WTC11 (cell line): ENCODE measurements at regions of chr19 and their contacts with region 1.

Region 1: GRCh38 chr19:47348819-47349795 is at the start of gene DHX34:
- DNase-seq: peak; percentile 99
- ATAC-seq: peak; percentile 97
- H3K4me3 Mint-ChIP-seq: peak within 1 kb of the TSS; percentile 92
- H3K27ac Mint-ChIP-seq: peak within 1 kb of the TSS; percentile 86
- H3K4me1 Mint-ChIP-seq: peaks cover 29% of the 10 kb centered on the region
- H3K27me3 Mint-ChIP-seq: peaks cover 14% of the 10 kb centered on the region
- CTCF ChIP-seq: peak; percentile 99
- total RNA-seq, gene DHX34: 35.6 to 36.5 TPM (median 35.6 TPM) in 3 replicates

Region 2: GRCh38 chr19:47225746-47226425 is 123.2 kb before region 1 on chr19:
- CTCF ChIA-PET with region 1: no interaction called
- POLR2A ChIA-PET with region 1: no interaction called
- DNase-seq: peak; percentile 84
- ATAC-seq: peak; percentile 18
- H3K4me3 Mint-ChIP-seq: peak overlapping the region; percentile 43
- H3K27ac Mint-ChIP-seq: peak overlapping the region; percentile 95
- H3K4me1 Mint-ChIP-seq: peaks cover 16% of the 10 kb centered on the region
- H3K27me3 Mint-ChIP-seq: no peaks in the 10 kb centered on the region; the same call in 1 of the 2 replicates
- CTCF ChIP-seq: no peak

Region 3: GRCh38 chr19:47273313-47273977 is 75.7 kb before region 1 on chr19:
- CTCF ChIA-PET with region 1: interaction called, 24 read pairs
- POLR2A ChIA-PET with region 1: interaction called, 3 read pairs
- DNase-seq: peak; percentile 93
- ATAC-seq: peak; percentile 63
- H3K4me3 Mint-ChIP-seq: peak overlapping the region; percentile 91
- H3K27ac Mint-ChIP-seq: peak overlapping the region; percentile 99
- H3K4me1 Mint-ChIP-seq: peaks cover 16% of the 10 kb centered on the region
- H3K27me3 Mint-ChIP-seq: peaks cover 18% of the 10 kb centered on the region
- CTCF ChIP-seq: no peak

Region 4: GRCh38 chr19:47305309-47305751 is 43.8 kb before region 1 on chr19:
- CTCF ChIA-PET with region 1: interaction called, 16 read pairs
- POLR2A ChIA-PET with region 1: no interaction called
- DNase-seq: peak; percentile 88
- ATAC-seq: peak; percentile 81
- H3K4me3 Mint-ChIP-seq: peak overlapping the region; percentile 45; the same call in 1 of the 2 replicates
- H3K27ac Mint-ChIP-seq: peak overlapping the region; percentile 73; the same call in 1 of the 2 replicates
- H3K4me1 Mint-ChIP-seq: peaks cover 2% of the 10 kb centered on the region
- H3K27me3 Mint-ChIP-seq: peaks cover 11% of the 10 kb centered on the region
- CTCF ChIP-seq: peak; percentile 96

Region 5: DNA sequence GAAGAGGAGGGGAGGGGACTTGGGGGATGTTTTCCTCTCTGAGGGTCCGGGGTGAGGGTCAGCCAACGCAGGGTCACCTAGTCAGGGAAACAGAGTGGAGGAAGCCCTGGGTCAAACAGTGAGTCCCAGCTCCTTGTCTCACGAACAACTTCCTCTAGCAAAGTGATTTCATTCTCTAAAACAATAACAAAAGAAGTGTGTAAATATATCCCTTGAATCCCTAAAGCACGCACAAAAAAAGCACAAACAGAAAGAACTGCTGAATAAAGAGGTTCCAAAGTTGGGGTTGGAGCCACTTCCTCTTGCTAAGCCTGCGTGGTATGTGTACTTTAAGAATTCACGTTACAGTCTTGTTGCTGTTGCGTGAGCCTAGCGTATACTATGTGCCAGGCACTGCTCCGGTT is 18.6 kb before region 1 on chr19:
- CTCF ChIA-PET with region 1: interaction called, 61 read pairs
- POLR2A ChIA-PET with region 1: interaction called, 3 read pairs
- DNase-seq: no peak
- ATAC-seq: no peak
- H3K4me3 Mint-ChIP-seq: no peak overlapping the region
- H3K27ac Mint-ChIP-seq: no peak overlapping the region
- H3K4me1 Mint-ChIP-seq: 0 out of 2 replicates have a peak, but pooled peaks cover 4% of the 10 kb centered on the region
- H3K27me3 Mint-ChIP-seq: peaks cover 4% of the 10 kb centered on the region; the same call in 1 of the 2 replicates
- CTCF ChIP-seq: no peak

Region 6: GRCh38 chr19:47391510-47392223 is 42.6 kb after region 1 on chr19:
- CTCF ChIA-PET with region 1: interaction called, 55 read pairs
- POLR2A ChIA-PET with region 1: interaction called, 6 read pairs
- DNase-seq: peak; percentile 91
- ATAC-seq: peak; percentile 99
- H3K4me3 Mint-ChIP-seq: 0 out of 2 replicates have a peak overlapping the region, but pooled peaks have one; percentile 21
- H3K27ac Mint-ChIP-seq: peak overlapping the region; percentile 58
- H3K4me1 Mint-ChIP-seq: peaks cover 22% of the 10 kb centered on the region
- H3K27me3 Mint-ChIP-seq: peaks cover 14% of the 10 kb centered on the region
- CTCF ChIP-seq: peak; percentile 92

Region 7: GRCh38 chr19:47485210-47485609 is 136.1 kb after region 1 on chr19:
- CTCF ChIA-PET with region 1: no interaction called
- POLR2A ChIA-PET with region 1: no interaction called
- DNase-seq: no peak
- ATAC-seq: no peak
- H3K4me3 Mint-ChIP-seq: peak overlapping the region; percentile 96
- H3K27ac Mint-ChIP-seq: peak overlapping the region; percentile 2; the same call in 1 of the 2 replicates
- H3K4me1 Mint-ChIP-seq: peaks cover 13% of the 10 kb centered on the region
- H3K27me3 Mint-ChIP-seq: peaks cover 9% of the 10 kb centered on the region
- CTCF ChIP-seq: no peak

Region 8: DNA sequence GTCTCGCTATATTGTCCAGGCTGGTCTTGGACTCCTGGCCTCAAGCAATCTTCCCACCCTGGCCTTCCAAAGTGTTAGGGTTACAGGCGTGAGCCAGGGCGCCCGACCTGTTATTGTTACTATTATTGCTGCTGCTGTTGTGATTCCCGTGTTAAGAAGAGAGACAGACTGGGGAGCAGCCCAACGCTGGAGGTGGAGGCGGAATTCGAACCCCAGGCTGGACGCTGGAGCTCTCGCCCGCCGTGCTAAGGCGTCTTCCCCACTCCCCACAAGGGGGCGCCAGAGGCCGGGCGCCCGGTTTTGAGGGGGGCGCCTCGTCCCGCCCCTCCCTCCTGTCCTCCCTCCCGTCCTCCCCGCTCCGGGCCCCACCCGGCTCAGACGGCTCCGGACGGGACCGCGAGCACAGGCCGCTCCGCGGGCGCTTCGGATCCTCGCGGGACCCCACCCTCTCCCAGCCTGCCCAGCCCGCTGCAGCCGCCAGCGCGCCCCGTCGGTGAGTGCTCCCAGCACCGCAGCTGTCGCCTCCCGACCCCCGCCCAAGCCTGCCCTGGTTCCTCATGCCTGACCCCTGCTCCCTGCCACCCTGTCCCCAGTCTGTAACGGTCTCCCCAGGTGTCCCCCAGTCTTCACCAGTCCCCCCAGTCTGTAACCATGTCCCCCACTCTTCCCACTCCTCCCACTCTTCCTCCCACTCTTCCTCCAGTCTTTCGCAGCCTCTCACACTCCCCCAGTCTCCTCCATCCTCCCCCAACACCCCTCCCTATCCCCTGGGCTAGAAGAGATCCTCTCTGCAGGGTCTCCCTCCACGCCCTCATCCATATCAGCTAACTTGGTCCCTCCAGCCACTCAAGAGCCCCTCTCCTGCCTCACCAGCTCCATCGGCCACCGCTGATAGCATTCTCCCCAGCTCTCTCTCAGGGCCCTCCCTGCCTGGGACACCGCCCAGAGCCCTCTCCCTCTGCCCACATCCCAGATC is 364.2 kb after region 1 on chr19 and contains the start of gene EHD2:
- CTCF ChIA-PET with region 1: interaction called, 10 read pairs
- POLR2A ChIA-PET with region 1: no interaction called
- DNase-seq: peak; percentile 72
- ATAC-seq: peak; percentile 81
- H3K4me3 Mint-ChIP-seq: peak within 1 kb of the TSS; percentile 66
- H3K27ac Mint-ChIP-seq: no peak within 1 kb of the TSS
- H3K4me1 Mint-ChIP-seq: 0 out of 2 replicates have a peak, but pooled peaks cover 7% of the 10 kb centered on the region
- H3K27me3 Mint-ChIP-seq: peaks cover 22% of the 10 kb centered on the region
- CTCF ChIP-seq: peak; percentile 97
- total RNA-seq, gene EHD2: 11.8 to 15.5 TPM (median 15.4 TPM) in 3 replicates